ENCODE measurements at regions of chr3 and their contacts with region 1.

Region 1: DNA sequence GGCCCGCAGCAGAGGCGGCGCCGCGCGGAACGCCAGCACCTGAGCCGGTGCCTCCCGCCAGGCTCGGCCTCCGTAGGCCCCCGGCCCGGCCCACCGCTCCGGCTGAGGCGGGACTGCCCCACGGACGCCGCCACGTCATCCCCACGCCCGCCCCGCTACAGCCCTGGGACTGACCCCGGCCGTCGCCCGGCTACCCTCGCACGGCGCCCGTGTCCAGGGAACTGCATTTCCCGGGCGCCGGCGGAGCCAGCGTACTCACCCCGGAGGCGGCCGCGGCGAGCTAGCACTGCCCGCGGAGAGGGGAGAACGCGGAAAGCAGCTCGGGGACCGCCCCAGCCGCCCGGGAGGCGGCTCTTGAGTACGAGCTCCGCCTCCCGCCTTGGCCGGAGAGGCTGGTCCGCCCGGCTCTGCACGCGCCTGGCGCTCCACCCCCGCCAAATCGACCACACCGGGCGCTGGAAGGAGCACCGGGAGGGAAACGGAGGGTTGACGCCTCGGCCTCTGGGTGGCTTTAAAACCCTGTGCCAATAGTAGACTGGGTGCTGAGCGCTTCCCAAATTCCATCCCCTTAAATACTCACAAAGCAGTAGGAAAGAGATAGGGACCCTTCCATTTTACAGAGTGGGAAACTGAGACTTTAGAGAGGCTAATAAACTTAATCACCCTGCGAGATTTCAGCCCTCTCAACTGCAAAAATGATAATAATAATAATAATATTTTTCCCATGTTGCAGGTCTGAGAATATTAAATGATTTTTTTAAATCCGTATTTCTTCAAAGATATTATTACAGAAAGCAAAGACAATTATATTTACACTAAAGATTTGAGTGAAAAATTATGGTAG is at the start of gene B4GALT4:
- DNase-seq: peak; percentile 70
- H3K4me3 Mint-ChIP-seq: peak within 1 kb of the TSS; percentile 88
- H3K27ac Mint-ChIP-seq: peak within 1 kb of the TSS; percentile 96
- H3K4me1 Mint-ChIP-seq: peaks cover 31% of the 10 kb centered on the region
- H3K27me3 Mint-ChIP-seq: no peaks in the 10 kb centered on the region
- total RNA-seq, gene B4GALT4: 22.0 to 22.8 TPM

Region 2: DNA sequence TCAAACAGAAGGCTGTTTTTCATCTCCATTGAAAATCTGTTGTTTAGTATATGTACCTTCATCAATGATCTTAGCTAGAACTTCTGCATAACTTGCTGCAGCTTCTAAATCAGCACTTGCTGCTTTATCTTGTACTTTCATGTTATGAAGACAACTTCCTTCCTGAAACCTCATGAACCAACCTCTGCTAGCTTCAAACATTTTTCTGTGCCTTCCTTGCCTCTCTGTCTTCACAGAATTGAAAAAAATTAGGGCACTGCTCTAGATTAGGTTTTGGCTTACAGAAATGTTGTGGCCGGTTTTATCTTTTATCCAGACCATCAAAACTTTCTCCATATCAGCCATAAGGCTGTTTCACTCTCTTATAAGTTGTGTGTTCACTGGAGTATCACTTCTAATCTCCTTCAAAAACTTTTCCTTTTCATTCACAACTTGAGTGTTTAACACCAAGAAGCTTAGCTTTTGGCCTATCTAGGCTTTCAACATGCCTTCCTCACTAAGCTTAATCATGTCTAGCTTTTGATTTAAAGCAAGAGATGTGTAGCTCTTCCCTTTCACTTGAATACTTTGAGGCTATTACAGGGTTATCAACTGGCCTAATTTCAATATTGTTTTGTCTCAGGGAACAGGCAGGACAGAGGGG is 284.8 kb before region 1 on chr3:
- CTCF ChIA-PET with region 1: no interaction called
- intact Hi-C with region 1: loop called (anchors 5 kb)
- DNase-seq: no peak
- H3K4me3 Mint-ChIP-seq: no peak overlapping the region
- H3K27ac Mint-ChIP-seq: peak overlapping the region; percentile 78
- H3K4me1 Mint-ChIP-seq: peaks cover 43% of the 10 kb centered on the region
- H3K27me3 Mint-ChIP-seq: no peaks in the 10 kb centered on the region

Region 3: GRCh38 chr3:119206611-119207511 is 34.0 kb before region 1 on chr3:
- CTCF ChIA-PET with region 1: interaction called, 19 read pairs
- intact Hi-C with region 1: loop called (anchors 1 kb)
- DNase-seq: peak; percentile 44
- H3K4me3 Mint-ChIP-seq: no peak overlapping the region
- H3K27ac Mint-ChIP-seq: no peak overlapping the region
- H3K4me1 Mint-ChIP-seq: peaks cover 56% of the 10 kb centered on the region
- H3K27me3 Mint-ChIP-seq: no peaks in the 10 kb centered on the region

Region 4: GRCh38 chr3:119293871-119294695 is 53.3 kb after region 1 on chr3 and contains the start of gene ARHGAP31:
- CTCF ChIA-PET with region 1: interaction called, 7 read pairs
- intact Hi-C with region 1: loop called (anchors 1 kb)
- DNase-seq: peak; percentile 94
- H3K4me3 Mint-ChIP-seq: peak within 1 kb of the TSS; percentile 82
- H3K27ac Mint-ChIP-seq: peak within 1 kb of the TSS; percentile 92
- H3K4me1 Mint-ChIP-seq: peaks cover 36% of the 10 kb centered on the region
- H3K27me3 Mint-ChIP-seq: no peaks in the 10 kb centered on the region
- total RNA-seq, gene ARHGAP31: 3.5 to 3.7 TPM

Region 5: GRCh38 chr3:119498186-119498987 is 257.6 kb after region 1 on chr3 and contains the start of gene TIMMDC1:
- CTCF ChIA-PET with region 1: interaction called, 5 read pairs
- intact Hi-C with region 1: loop called (anchors 1 kb)
- DNase-seq: peak; percentile 98
- H3K4me3 Mint-ChIP-seq: peak within 1 kb of the TSS; percentile 99
- H3K27ac Mint-ChIP-seq: peak within 1 kb of the TSS; percentile 94
- H3K4me1 Mint-ChIP-seq: peaks cover 37% of the 10 kb centered on the region
- H3K27me3 Mint-ChIP-seq: no peaks in the 10 kb centered on the region
- total RNA-seq, gene TIMMDC1: 75.6 to 83.8 TPM

Region 6: GRCh38 chr3:119702530-119703157 is 461.8 kb after region 1 on chr3 and contains the start of gene CFAP91:
- CTCF ChIA-PET with region 1: no interaction called
- intact Hi-C with region 1: loop called (anchors 1 kb)
- DNase-seq: peak; percentile 83
- H3K4me3 Mint-ChIP-seq: peak within 1 kb of the TSS; percentile 72
- H3K27ac Mint-ChIP-seq: no peak within 1 kb of the TSS
- H3K4me1 Mint-ChIP-seq: peaks cover 45% of the 10 kb centered on the region
- H3K27me3 Mint-ChIP-seq: peaks cover 2% of the 10 kb centered on the region
- total RNA-seq, gene CFAP91: 0.26 to 0.57 TPM